Activated CD4-positive, alpha-beta memory T cell treated with anti-CD3 and anti-CD28 coated beads, Interleukin-2, amount 10 ng/mL, durations not matched to agents 7 days and 5 days (primary cell): ENCODE measurements at regions of chr1 and their contacts with region 1.

Region 1: GRCh38 chr1:26998429-26999300 is 5.2 kb downstream of the TRNP1 start:
- DNase-seq: no peak
- H3K4me3 Mint-ChIP-seq: no peak overlapping the region
- H3K27ac Mint-ChIP-seq: no peak overlapping the region
- H3K4me1 Mint-ChIP-seq: peaks cover 7% of the 10 kb centered on the region
- H3K27me3 Mint-ChIP-seq: peaks cover 38% of the 10 kb centered on the region

Region 2: DNA sequence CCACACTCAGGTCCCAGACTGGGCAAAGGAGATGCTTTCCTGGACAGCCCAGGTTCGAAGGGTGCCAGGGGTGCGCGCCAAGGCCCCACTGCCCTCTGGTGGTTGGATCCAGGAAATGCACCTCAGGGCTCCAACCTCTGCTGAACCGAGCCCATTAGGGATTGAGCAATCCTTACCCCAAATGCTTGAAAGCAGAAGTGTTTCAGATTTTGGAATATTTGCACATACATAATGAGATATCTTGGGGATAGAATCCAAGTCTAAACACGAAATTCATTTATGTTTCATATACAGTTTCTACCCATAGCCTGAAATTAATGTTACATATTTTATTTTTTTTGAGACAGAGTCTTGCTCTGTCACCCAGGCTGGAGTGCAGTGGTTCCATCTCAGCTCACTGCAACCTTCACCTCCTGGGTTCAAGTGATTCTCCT is 98.8 kb after region 1 on chr1:
- CTCF ChIA-PET with region 1: interaction called, 18 read pairs
- POLR2A ChIA-PET with region 1: no interaction called
- DNase-seq: peak; percentile 80
- H3K4me3 Mint-ChIP-seq: no peak overlapping the region
- H3K27ac Mint-ChIP-seq: no peak overlapping the region
- H3K4me1 Mint-ChIP-seq: peaks cover 12% of the 10 kb centered on the region
- H3K27me3 Mint-ChIP-seq: no peaks in the 10 kb centered on the region